ENCODE measurements at regions of chr10 and their contacts with region 1.

Region 1: GRCh38 chr10:86535057-86535882 is 13.7 kb upstream of the WAPL start:
- DNase-seq: peak; percentile 20
- ATAC-seq: peak; percentile 99
- H3K4me3 ChIP-seq: peak overlapping the region; percentile 42 to 89
- H3K27ac ChIP-seq: peak overlapping the region; percentile 78
- H3K4me1 ChIP-seq: peaks cover 5% of the 10 kb centered on the region; the same call in 1 of the 2 replicates
- H3K27me3 ChIP-seq: no peaks in the 10 kb centered on the region
- CTCF ChIP-seq: no peak

Region 2: DNA sequence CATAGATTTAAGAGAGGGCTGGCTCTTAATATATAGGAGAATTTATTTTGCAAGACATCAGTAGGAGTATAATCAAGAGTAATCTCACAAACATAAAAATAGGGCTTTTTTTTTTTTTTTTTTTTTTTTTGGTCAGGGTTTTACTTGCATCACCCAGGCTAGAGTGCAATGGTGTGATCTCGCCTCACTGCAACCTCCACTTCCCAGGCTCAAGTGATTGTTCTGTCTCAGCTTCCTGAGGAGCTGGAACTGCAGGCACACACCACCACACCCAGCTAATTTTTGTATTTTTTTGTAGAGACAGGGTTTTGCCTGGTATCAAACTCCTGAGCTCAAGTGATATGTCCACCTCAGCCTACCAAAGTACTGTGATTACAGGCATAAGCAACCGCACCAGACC is 1671.6 kb before region 1 on chr10:
- CTCF ChIA-PET with region 1: interaction called, 11 read pairs
- POLR2A ChIA-PET with region 1: no interaction called
- in situ Hi-C with region 1: no loop called
- intact Hi-C with region 1: no loop called
- DNase-seq: no peak
- ATAC-seq: no peak
- H3K4me3 ChIP-seq: no peak overlapping the region
- H3K27ac ChIP-seq: no peak overlapping the region
- H3K4me1 ChIP-seq: no peaks in the 10 kb centered on the region
- H3K27me3 ChIP-seq: no peaks in the 10 kb centered on the region
- CTCF ChIP-seq: no peak

Region 3: DNA sequence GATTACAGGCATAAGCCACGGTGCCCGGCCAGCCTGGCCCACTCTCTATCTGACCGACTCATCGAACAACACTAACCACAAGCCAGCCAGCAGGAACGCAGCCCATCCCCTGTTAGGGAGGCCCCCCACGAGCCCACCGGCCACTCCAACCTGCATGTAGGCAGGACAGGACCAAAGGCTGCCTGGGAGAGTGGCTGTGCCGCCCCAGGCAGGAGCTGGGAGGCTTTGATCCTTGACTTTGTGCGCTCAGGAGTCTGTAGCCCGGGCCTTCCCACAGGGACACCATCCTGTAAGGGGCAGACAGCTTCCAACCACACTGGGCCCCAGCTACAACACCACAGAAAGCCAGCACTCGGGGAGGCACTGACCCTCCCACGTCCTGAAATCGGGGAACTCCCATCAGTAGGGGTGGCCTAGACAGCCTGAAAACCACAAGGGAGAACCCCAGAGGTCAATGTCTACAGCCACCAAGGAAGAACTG is 198.1 kb before region 1 on chr10:
- CTCF ChIA-PET with region 1: interaction called, 12 read pairs
- POLR2A ChIA-PET with region 1: no interaction called
- in situ Hi-C with region 1: no loop called
- intact Hi-C with region 1: no loop called
- DNase-seq: no peak
- ATAC-seq: no peak
- H3K4me3 ChIP-seq: no peak overlapping the region
- H3K27ac ChIP-seq: no peak overlapping the region
- H3K4me1 ChIP-seq: no peaks in the 10 kb centered on the region
- H3K27me3 ChIP-seq: peaks cover 2% of the 10 kb centered on the region; the same call in 1 of the 2 replicates
- CTCF ChIP-seq: no peak

Measured in Panc1 (cell line).